Right ventricle myocardium inferior (tissue), 1 donor: ENCODE measurements at regions of chr6 and their contacts with region 1.

Region 1: DNA sequence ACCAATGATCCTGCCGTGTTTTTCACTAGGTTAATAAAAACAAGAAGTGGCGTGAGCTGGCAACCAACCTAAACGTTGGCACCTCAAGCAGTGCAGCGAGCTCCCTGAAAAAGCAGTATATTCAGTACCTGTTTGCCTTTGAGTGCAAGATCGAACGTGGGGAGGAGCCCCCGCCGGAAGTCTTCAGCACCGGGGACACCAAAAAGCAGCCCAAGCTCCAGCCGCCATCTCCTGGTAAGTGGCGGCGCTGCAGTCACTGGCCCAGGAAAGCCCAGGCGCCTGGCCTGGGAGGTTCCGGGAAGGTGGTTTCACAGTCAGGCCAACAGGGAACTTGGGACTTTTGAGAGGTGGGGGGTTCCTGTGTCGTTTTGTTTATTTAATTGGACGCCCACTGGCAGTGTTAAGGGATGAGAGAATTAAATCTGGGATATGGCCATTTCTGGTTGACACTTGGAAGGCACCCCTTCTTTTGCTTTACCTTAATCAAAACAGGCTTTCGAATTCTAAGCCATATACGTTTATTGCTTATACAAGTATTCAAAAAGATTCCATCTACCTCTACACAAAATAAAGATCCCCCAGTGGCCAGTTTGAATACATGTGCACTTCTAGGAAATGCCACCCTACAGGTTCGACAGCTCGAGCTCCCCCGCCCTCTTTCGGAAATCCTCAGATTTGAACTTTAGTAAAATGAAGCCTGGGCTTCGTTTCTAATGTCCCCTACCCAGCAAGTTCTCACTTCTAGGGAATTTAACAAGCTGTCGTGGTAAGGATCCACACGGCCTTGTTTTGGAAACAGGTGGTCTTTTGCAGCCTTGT is 138.9 kb downstream of the TMEM242 start:
- DNase-seq: peak; percentile 80
- ATAC-seq: peak; percentile 73

Region 2: DNA sequence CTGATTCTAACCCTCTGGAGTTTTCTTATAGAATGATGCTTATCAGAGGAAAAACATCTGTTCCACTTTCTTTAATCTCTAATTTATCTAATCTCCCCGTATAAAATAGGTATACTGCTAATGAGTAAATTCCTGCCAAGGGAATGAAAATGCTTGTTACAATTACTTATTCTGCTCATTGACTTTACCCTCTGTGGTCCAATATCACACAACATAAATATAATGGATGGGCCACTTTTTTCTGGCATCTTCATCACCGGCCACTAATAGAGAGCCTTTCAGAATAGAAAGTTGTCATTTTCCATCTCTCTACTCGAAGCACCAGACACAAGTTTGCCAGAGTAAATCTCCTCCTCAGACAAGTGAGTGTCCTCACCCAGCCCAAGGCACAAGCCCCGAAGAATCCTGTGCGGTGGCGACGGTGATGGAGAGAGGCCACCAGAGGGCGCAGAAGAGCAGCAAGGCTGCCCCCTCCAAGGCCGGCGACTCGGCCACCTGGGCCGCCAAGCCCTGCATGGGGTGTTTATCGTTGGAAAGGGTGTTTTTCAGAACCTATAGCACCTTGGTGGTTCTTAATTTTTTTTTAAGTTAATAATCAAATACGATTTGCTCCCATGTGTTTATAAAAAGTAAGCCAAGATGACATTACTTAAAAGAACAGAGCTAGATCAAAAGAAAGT is 620.1 kb before region 1 on chr6:
- intact Hi-C with region 1: loop called (anchors 5 kb)
- DNase-seq: peak; percentile 90
- ATAC-seq: peak; percentile 94

Region 3: GRCh38 chr6:157034436-157035230 is 149.8 kb before region 1 on chr6:
- intact Hi-C with region 1: loop called (anchors 5 kb)
- DNase-seq: no peak
- ATAC-seq: no peak

Region 4: DNA sequence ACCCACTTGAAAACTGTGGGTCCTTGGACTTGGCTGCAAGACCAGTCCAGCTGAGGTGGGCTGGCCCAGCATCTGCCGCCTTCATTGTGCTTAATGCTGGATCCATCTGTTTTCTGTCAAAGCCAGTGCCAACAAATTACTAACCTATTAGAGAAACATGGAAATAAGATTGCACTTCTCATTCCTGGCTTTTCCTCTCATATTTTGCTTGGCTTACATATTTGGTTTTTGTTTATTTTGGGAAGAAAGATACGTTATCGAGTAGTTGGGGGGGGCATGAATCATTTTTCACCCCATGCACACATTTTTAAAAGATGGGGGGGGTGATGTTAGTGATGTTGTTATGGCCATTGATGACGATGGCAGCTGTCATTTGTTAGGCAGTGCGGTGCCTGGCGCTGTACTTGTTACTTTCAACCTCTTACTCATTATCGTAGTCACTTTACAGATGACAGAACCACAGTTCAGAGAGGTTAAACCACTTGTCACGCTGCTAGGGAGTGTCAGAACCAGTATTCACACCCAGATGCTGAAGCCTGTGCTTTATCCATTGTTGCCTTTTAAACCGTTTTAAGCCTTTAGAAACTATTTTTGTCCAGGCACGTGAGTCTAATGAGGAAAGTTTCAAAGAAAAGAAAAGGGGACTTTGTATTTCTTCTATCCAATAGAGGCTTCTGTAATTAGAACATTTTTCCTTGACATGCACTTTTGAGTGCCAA is 41.1 kb before region 1 on chr6:
- intact Hi-C with region 1: loop called (anchors 5 kb)
- DNase-seq: no peak
- ATAC-seq: peak; percentile 84